Testis (tissue), 5 donors: ENCODE measurements at regions of chr19 and their contacts with region 1.

Region 1: DNA sequence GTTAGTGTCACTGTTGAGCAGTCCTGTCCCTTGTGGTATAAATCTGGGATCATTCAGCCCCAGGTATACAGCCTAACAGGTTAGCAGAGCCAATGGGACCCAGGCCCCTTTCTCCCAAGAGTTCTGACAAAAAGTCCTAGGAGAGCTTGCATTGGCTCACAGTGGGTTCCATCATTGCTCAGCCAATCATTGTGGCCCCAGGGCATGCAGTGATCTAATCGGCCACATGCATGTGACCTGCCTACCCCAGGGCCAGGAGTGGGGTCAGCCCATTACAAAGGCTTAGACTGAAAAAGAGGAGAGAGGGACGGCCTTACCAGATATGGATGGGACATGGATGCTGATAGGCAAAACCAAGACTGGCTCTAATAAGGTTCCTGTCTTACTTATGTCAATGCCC is 41.1 kb downstream of the SPTBN4 start:
- DNase-seq: no peak
- H3K4me3 ChIP-seq: no peak overlapping the region
- H3K27ac ChIP-seq: no peak overlapping the region
- H3K4me1 ChIP-seq: no peaks in the 10 kb centered on the region
- H3K27me3 ChIP-seq: no peaks in the 10 kb centered on the region
- CTCF ChIP-seq: no peak
- POLR2A ChIP-seq: no peak

Region 2: DNA sequence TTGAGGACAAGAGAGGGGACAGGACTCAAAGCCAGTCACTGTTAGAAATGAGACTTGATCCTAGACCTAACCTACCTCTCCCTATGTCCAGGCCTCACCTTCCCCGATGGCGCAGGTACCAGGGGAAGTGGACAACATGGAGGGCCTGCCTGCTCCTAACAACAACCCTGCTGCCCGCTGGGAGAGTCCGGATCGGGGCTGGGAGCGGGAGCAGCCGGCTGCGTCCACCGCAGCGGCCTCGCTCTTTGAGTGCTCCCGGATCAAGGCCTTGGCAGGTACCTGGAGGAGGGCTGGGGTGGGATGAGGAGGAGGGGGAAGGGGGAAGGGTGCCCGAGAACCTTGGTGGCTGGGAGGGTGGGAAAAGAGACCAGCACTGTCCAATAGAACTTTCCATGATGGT is 35.4 kb before region 1 on chr19:
- intact Hi-C with region 1: loop called (anchors 1 kb)
- DNase-seq: no peak
- H3K4me3 ChIP-seq: no peak overlapping the region
- H3K27ac ChIP-seq: no peak overlapping the region
- H3K4me1 ChIP-seq: peaks cover 4% of the 10 kb centered on the region
- H3K27me3 ChIP-seq: no peaks in the 10 kb centered on the region
- CTCF ChIP-seq: no peak
- POLR2A ChIP-seq: no peak